ENCODE measurements at regions of chr10 and their contacts with region 1.

Region 1: DNA sequence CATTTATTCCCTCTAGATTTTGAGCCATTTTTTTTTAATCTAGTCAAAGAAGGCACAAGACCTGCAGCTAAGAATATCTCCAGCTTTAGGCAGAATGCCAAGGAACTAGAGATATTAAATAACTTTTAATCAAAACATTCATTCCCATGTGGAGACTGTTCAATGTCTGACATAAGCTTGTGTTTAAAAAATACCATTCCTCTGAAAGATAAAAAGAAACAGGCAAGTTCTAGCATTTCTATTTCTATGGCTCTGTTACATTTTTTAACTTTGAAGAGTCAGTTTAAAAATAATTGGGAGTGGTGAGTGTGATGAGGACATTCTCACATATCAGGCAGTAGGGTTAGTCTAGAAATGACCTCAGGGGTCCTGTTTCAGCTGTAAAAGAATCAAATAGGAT is 48.0 kb downstream of the RHOBTB1 start:
- DNase-seq: no peak
- H3K4me3 ChIP-seq: no peak overlapping the region
- H3K27ac ChIP-seq: peak overlapping the region in 1 of 2 donors; percentile 61
- H3K4me1 ChIP-seq: peaks cover 7% of the 10 kb centered on the region
- H3K27me3 ChIP-seq: no peaks in the 10 kb centered on the region
- CTCF ChIP-seq: no peak
- EP300 ChIP-seq: no peak
- POLR2A ChIP-seq: no peak

Region 2: GRCh38 chr10:60784641-60785040 is 111.4 kb before region 1 on chr10:
- intact Hi-C with region 1: no loop called
- DNase-seq: no peak
- H3K4me3 ChIP-seq: no peak overlapping the region
- H3K27ac ChIP-seq: no peak overlapping the region
- H3K4me1 ChIP-seq: no peaks in the 10 kb centered on the region
- H3K27me3 ChIP-seq: no peaks in the 10 kb centered on the region
- CTCF ChIP-seq: no peak
- EP300 ChIP-seq: no peak
- POLR2A ChIP-seq: no peak

Region 3: GRCh38 chr10:60932756-60933155 is 36.7 kb after region 1 on chr10:
- intact Hi-C with region 1: no loop called
- DNase-seq: no peak
- H3K4me3 ChIP-seq: no peak overlapping the region
- H3K27ac ChIP-seq: no peak overlapping the region
- H3K4me1 ChIP-seq: peaks cover 8% of the 10 kb centered on the region
- H3K27me3 ChIP-seq: no peaks in the 10 kb centered on the region
- CTCF ChIP-seq: no peak
- EP300 ChIP-seq: no peak
- POLR2A ChIP-seq: no peak

Region 4: DNA sequence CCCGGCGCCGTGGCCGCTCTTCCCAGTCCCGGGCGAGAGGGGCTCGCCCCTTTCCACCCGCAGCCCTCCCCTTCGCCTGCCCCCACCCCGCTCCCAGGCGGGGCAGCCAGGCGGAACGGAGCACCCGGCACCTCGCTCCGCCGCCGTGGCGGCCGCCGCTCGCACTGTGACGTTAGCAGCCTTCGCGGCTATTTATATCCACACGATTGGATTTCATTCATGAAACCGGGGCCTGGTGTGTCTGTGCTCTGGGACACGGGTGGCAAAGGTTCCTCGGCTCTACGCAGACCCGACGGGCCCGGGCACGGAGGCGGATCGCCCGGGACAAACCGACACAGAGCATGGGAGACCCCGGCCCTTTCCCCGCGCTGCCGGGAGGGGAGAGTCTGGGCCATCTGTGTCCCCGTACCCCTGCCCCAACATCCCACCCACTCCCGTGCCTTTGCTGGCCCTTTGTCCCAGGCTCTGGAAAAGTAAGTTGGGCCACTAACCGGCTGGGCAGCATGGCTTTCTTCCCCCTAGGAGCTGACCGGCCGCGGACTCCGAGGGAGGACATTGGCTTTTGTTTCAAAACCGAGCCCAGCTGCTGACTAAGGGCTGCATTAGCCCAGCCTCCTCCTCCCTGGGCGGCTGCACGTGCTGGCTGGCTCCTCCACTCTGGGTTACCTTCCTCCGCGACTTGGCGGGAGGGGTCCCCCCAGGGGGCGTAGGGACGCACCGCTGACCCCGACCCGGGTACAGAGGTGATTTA is 48.3 kb after region 1 on chr10 and contains the start of gene RHOBTB1:
- intact Hi-C with region 1: loop called in 1 of 4 experiments (anchors 5 kb)
- DNase-seq: peak; percentile 77 to 86 (median 80)
- H3K4me3 ChIP-seq: peak within 1 kb of the TSS; percentile 85
- H3K27ac ChIP-seq: peak within 1 kb of the TSS; percentile 91 to 95
- H3K4me1 ChIP-seq: no peaks in the 10 kb centered on the region
- H3K27me3 ChIP-seq: no peaks in the 10 kb centered on the region
- CTCF ChIP-seq: no peak
- EP300 ChIP-seq: no peak
- POLR2A ChIP-seq: peak; percentile 84
- total RNA-seq, gene RHOBTB1: 5.6 to 23.9 (median 13.0) TPM

Measured in ovary (tissue), 10 donors.